ENCODE measurements at regions of chr1 and their contacts with region 1.

Region 1: GRCh38 chr1:75134647-75135572 is 722 bp downstream of the LHX8 start:
- DNase-seq: no peak
- H3K4me3 Mint-ChIP-seq: peak overlapping the region; percentile 81
- H3K27ac Mint-ChIP-seq: no peak overlapping the region
- H3K4me1 Mint-ChIP-seq: peaks cover 11% of the 10 kb centered on the region
- H3K27me3 Mint-ChIP-seq: peaks cover 86% of the 10 kb centered on the region

Region 2: DNA sequence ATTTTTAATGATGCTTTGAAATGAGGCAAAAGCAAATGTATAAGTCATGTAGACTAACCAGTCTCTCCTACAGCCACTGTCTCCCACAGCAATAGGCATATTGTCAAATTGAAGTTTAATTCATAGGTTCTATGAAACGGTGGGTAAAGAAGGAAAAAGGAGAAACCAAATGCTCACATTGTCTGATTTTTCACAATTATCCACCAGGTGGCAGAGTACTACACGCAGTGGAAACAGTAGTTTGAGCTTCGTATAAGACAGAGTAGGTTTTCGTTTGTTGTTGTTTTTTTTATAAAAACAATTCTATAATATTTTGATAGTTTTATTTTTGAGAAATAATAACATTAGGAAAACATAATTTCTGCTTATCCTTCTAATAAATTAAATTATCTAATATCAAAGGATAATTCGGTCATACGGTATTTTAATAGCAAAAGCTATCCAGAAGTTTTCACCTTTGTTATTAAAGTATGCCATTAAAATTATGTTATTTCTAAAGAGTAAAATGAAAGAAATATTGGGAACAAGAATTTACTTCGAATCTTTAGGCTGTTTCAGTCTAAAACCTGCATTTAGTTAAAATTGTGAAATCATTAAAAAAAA is 362.9 kb before region 1 on chr1:
- intact Hi-C with region 1: loop called (anchors 10 kb)
- DNase-seq: no peak
- H3K4me3 Mint-ChIP-seq: no peak overlapping the region
- H3K27ac Mint-ChIP-seq: no peak overlapping the region
- H3K4me1 Mint-ChIP-seq: no peaks in the 10 kb centered on the region
- H3K27me3 Mint-ChIP-seq: peaks cover 2% of the 10 kb centered on the region

Region 3: DNA sequence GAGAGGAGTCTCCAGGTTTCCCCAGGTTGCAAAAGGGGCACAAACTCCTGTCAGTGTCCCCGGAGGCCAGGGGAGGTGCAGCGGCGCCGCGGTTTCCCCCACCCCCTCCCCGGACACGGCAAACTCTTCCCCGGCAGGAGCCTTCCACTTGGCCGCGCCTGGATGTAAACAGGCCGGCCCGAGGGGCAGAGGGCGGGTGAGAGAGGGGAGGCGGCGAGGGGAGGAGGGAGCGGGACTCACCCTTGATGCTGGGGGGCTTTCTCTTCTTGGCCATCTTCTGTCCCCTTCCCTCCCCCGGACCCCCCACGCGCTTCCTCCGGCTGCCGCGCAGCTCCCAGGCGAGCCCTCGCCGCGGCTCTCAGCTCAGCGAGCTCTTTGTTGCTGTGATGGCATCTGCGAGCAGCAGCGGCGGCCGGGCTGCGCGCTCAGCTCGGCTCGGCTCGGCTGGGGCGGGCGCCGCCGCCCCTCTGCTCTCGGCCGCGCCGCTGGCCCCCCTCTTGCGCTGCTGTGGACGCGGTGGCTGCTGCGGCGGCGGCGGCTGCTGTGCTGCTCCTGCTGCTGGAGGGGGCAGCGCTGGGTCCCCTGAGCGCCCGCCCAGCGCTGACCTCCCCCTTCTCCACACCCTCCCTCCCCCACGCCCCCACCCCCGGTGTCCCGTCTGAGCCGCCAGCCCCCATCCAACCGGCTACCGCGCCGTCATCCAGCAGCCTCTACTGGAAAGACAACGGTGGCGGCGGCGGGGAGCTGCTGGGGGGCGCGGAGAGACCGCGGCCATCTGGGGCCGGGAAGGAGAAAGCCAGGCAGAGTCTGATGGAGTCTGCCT is 480.9 kb after region 1 on chr1:
- intact Hi-C with region 1: loop called (anchors 5 kb)
- DNase-seq: no peak
- H3K4me3 Mint-ChIP-seq: peak overlapping the region; percentile 54
- H3K27ac Mint-ChIP-seq: no peak overlapping the region
- H3K4me1 Mint-ChIP-seq: peaks cover 3% of the 10 kb centered on the region
- H3K27me3 Mint-ChIP-seq: peaks cover 68% of the 10 kb centered on the region

Region 4: GRCh38 chr1:76868154-76868882 is 1733.4 kb after region 1 on chr1:
- intact Hi-C with region 1: loop called (anchors 10 kb)
- DNase-seq: no peak
- H3K4me3 Mint-ChIP-seq: peak overlapping the region; percentile 60
- H3K27ac Mint-ChIP-seq: no peak overlapping the region
- H3K4me1 Mint-ChIP-seq: no peaks in the 10 kb centered on the region
- H3K27me3 Mint-ChIP-seq: peaks cover 66% of the 10 kb centered on the region

Measured in activated T-helper 2 cell treated with anti-CD3 and anti-CD28 coated beads, Interferon-gamma antibody, Interleukin-2, Interleukin-4, amounts not matched to agents 10 μg/mL and 5 μg/mL and 100 μg/mL, durations not matched to agents 14 hours and 24 hours and 36 hours (primary cell).